ENCODE measurements at regions of chr17 and their contacts with region 1.

Region 1: GRCh38 chr17:77465358-77466041 is 324.7 kb downstream of the SEC14L1 start:
- DNase-seq: peak; percentile 63 to 91 (median 78)
- ATAC-seq: peak; percentile 93
- H3K4me3 ChIP-seq: peak overlapping the region; percentile 39
- H3K4me3 Mint-ChIP-seq: peak overlapping the region; percentile 85
- H3K27ac ChIP-seq: peak overlapping the region; percentile 58 to 74
- H3K27ac Mint-ChIP-seq: peak overlapping the region; percentile 96
- H3K4me1 ChIP-seq: peaks cover 100% of the 10 kb centered on the region
- H3K4me1 Mint-ChIP-seq: peaks cover 84% of the 10 kb centered on the region
- H3K27me3 ChIP-seq: no peaks in the 10 kb centered on the region
- H3K27me3 Mint-ChIP-seq: no peaks in the 10 kb centered on the region
- CTCF ChIP-seq: no peak

Region 2: GRCh38 chr17:77382966-77383612 is 82.4 kb before region 1 on chr17:
- CTCF ChIA-PET with region 1: no interaction called
- POLR2A ChIA-PET with region 1: interaction called, 10 read pairs
- intact Hi-C with region 1: no loop called
- DNase-seq: no peak
- ATAC-seq: peak; percentile 9
- H3K4me3 ChIP-seq: peak overlapping the region; percentile 41
- H3K4me3 Mint-ChIP-seq: peak overlapping the region; percentile 50
- H3K27ac ChIP-seq: peak overlapping the region in 1 of 2 donors; percentile 32
- H3K27ac Mint-ChIP-seq: peak overlapping the region; percentile 93
- H3K4me1 ChIP-seq: peaks cover 100% of the 10 kb centered on the region
- H3K4me1 Mint-ChIP-seq: peaks cover 93% of the 10 kb centered on the region
- H3K27me3 ChIP-seq: no peaks in the 10 kb centered on the region
- H3K27me3 Mint-ChIP-seq: no peaks in the 10 kb centered on the region
- CTCF ChIP-seq: no peak

Region 3: DNA sequence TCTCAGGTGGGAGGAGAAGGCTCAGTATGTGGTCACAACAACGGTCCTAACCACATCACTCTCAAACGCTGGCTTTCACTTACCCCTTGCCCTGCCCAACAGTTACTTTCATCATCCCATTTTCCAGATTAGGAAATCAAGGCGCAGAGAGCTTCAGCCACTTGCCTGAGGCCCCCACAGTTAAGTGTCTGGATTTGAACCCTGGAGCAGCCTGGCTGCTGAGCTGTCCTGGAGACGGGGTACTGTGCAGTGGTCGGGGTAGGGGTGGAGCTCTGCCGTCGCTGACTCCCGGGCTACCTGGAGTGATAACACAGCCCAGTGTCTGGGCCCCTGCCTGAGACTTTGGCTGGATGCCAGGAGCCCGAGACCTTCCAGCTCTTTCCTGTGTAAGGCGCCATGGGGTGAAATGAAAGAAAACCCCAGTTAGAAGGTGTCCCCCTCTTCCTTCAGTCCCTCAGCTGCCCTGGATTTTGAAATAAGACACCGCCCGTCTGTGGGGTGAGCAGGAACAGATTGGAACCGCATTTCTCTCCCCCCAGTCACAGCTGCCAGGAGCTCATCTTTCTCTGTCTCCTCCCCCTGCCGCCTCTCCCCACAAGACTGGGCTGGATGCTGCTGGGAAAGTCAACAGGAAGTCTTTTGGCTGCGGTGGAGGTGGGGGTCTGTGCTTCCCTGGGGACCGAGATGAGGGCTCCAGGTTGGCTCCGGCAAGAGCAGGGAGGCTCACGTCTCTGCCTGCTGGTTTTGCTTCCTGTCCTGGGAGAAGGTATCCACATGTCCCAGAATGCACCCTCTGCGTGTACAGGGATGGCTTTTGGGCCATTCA is 44.5 kb before region 1 on chr17:
- CTCF ChIA-PET with region 1: no interaction called
- POLR2A ChIA-PET with region 1: interaction called, 13 read pairs
- intact Hi-C with region 1: no loop called
- DNase-seq: peak; percentile 44 to 82 (median 66)
- ATAC-seq: peak; percentile 69
- H3K4me3 ChIP-seq: peak overlapping the region; percentile 31
- H3K4me3 Mint-ChIP-seq: peak overlapping the region; percentile 83
- H3K27ac ChIP-seq: peak overlapping the region; percentile 61 to 76
- H3K27ac Mint-ChIP-seq: peak overlapping the region; percentile 89
- H3K4me1 ChIP-seq: peaks cover 92% of the 10 kb centered on the region
- H3K4me1 Mint-ChIP-seq: peaks cover 65% of the 10 kb centered on the region
- H3K27me3 ChIP-seq: no peaks in the 10 kb centered on the region
- H3K27me3 Mint-ChIP-seq: no peaks in the 10 kb centered on the region
- CTCF ChIP-seq: no peak

Region 4: DNA sequence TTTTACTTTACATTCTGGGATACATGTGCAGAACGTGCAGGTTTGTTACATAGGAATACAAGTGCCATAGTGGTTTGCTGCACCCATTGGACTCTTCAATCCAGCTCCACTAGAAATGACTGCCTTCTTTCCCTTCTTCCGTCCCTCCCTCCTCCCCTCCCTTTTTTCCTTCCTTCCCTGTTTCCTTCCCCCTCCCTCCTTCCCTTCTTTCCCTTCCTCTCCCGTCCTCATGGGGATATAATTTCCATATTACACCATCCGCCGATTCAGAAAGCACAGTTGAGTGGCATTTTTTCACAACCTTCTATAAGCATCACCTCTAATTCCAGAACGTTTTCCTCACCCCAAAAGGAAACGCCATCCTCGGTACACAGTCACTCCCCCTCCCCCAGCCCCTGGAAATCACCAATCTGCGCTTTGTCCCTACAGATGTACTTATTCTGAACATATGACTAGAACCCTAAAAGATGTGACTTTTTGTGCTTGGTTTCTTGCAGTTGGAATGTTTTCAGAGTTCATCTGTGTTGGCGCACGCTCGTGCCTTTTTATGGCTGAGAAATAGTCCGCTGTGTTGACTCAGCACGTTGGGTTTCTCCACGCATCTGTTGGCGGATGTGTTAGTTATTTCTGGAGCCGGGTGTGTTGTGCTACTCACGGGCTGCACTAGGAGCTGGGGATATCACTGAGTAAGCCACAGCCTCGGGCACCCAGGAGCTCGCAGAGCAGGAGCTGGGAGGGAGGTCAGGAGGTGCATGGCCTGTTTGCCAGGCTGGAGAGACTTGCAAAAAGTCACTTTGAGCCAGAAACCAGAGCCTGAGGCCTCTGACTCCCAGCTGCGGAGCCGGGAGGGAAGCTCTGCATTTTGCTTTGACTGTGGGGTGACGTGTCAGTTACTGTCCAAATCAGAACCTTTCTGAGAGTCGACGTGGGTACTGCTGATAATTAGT is 11.7 kb after region 1 on chr17:
- CTCF ChIA-PET with region 1: interaction called, 15 read pairs
- POLR2A ChIA-PET with region 1: interaction called, 62 read pairs
- intact Hi-C with region 1: loop called in 1 of 2 experiments (anchors 2 kb)
- DNase-seq: peak in 2 of 14 experiments; percentile 47 to 48
- ATAC-seq: peak; percentile 33
- H3K4me3 ChIP-seq: no peak overlapping the region
- H3K4me3 Mint-ChIP-seq: peak overlapping the region; percentile 74
- H3K27ac ChIP-seq: peak overlapping the region; percentile 58 to 75
- H3K27ac Mint-ChIP-seq: peak overlapping the region; percentile 97
- H3K4me1 ChIP-seq: peaks cover 98% of the 10 kb centered on the region
- H3K4me1 Mint-ChIP-seq: peaks cover 79% of the 10 kb centered on the region
- H3K27me3 ChIP-seq: no peaks in the 10 kb centered on the region
- H3K27me3 Mint-ChIP-seq: no peaks in the 10 kb centered on the region
- CTCF ChIP-seq: no peak

Region 5: DNA sequence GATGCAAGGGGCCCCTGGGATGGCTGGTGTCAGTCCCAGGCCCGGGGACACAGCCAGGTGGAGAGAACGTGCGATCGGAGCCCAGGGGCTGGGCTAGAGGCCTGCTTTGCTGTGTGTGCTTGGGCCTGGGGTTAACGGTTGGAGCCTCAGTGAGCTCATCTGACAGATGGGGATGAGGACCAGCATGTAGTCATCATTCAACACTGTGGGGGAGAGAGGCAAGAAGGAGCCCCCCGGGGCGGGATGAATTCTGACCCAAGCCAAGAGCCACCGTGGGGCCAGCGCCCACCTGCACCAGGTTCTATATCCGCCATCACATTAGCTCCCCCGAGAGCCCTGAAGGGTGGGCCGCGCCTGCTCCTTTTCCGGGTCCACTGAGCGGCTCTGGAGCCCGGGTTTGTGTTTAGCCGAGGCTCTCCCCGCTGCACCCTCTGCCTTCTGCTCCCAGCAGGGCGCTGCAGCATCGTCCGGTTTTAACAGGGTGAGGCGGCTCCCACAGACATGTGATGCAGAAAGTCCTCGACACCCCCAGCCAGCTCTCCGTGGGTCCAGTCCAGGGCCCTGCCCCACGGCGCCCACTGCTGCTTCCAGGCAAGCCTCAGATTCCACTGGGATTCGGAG is 41.0 kb after region 1 on chr17:
- CTCF ChIA-PET with region 1: no interaction called
- POLR2A ChIA-PET with region 1: no interaction called
- intact Hi-C with region 1: no loop called
- DNase-seq: no peak
- ATAC-seq: no peak
- H3K4me3 ChIP-seq: no peak overlapping the region
- H3K4me3 Mint-ChIP-seq: no peak overlapping the region
- H3K27ac ChIP-seq: no peak overlapping the region
- H3K27ac Mint-ChIP-seq: no peak overlapping the region
- H3K4me1 ChIP-seq: no peaks in the 10 kb centered on the region
- H3K4me1 Mint-ChIP-seq: no peaks in the 10 kb centered on the region
- H3K27me3 ChIP-seq: no peaks in the 10 kb centered on the region
- H3K27me3 Mint-ChIP-seq: no peaks in the 10 kb centered on the region
- CTCF ChIP-seq: no peak

Region 6: GRCh38 chr17:77666881-77667395 is 201.4 kb after region 1 on chr17:
- CTCF ChIA-PET with region 1: no interaction called
- POLR2A ChIA-PET with region 1: no interaction called
- intact Hi-C with region 1: no loop called
- DNase-seq: peak; percentile 41 to 92 (median 58)
- ATAC-seq: peak; percentile 91
- H3K4me3 ChIP-seq: peak overlapping the region; percentile 58
- H3K4me3 Mint-ChIP-seq: peak overlapping the region; percentile 82
- H3K27ac ChIP-seq: peak overlapping the region; percentile 66 to 72
- H3K27ac Mint-ChIP-seq: peak overlapping the region; percentile 93
- H3K4me1 ChIP-seq: peaks cover 24% of the 10 kb centered on the region
- H3K4me1 Mint-ChIP-seq: peaks cover 53% of the 10 kb centered on the region
- H3K27me3 ChIP-seq: no peaks in the 10 kb centered on the region
- H3K27me3 Mint-ChIP-seq: no peaks in the 10 kb centered on the region
- CTCF ChIP-seq: no peak